Naive thymus-derived CD4-positive, alpha-beta T cell (primary cell): ENCODE measurements at regions of chr6 and their contacts with region 1.

Region 1: GRCh38 chr6:156760377-156760776 is 16.8 kb upstream of the ARID1B start:
- DNase-seq: no peak
- ATAC-seq: no peak
- H3K4me3 ChIP-seq: no peak overlapping the region
- H3K4me3 Mint-ChIP-seq: no peak overlapping the region
- H3K27ac ChIP-seq: no peak overlapping the region
- H3K27ac Mint-ChIP-seq: no peak overlapping the region
- H3K4me1 ChIP-seq: no peaks in the 10 kb centered on the region
- H3K4me1 Mint-ChIP-seq: peaks cover 0 to 6% (median 0%) of the 10 kb centered on the region in 7 donors
- H3K27me3 ChIP-seq: no peaks in the 10 kb centered on the region
- H3K27me3 Mint-ChIP-seq: peaks cover 0 to 15% (median 6%) of the 10 kb centered on the region in 5 donors

Region 2: GRCh38 chr6:156727715-156728385 is 32.5 kb before region 1 on chr6:
- CTCF ChIA-PET with region 1: no interaction called
- POLR2A ChIA-PET with region 1: no interaction called
- intact Hi-C with region 1: loop called in 1 of 2 experiments (anchors 2 kb)
- DNase-seq: no peak
- ATAC-seq: peak; percentile 46
- H3K4me3 ChIP-seq: no peak overlapping the region
- H3K4me3 Mint-ChIP-seq: no peak overlapping the region
- H3K27ac ChIP-seq: no peak overlapping the region
- H3K27ac Mint-ChIP-seq: no peak overlapping the region
- H3K4me1 ChIP-seq: no peaks in the 10 kb centered on the region
- H3K4me1 Mint-ChIP-seq: no peaks in the 10 kb centered on the region
- H3K27me3 ChIP-seq: no peaks in the 10 kb centered on the region
- H3K27me3 Mint-ChIP-seq: peaks cover 0 to 16% (median 0%) of the 10 kb centered on the region in 5 donors